ENCODE measurements at regions of chr3 and their contacts with region 1.

Region 1: GRCh38 chr3:65425880-65426279 is 612.8 kb downstream of the MAGI1 start:
- DNase-seq: no peak
- H3K4me3 ChIP-seq: no peak overlapping the region
- H3K27me3 ChIP-seq: no peaks in the 10 kb centered on the region
- CTCF ChIP-seq: peak; percentile 50

Region 2: DNA sequence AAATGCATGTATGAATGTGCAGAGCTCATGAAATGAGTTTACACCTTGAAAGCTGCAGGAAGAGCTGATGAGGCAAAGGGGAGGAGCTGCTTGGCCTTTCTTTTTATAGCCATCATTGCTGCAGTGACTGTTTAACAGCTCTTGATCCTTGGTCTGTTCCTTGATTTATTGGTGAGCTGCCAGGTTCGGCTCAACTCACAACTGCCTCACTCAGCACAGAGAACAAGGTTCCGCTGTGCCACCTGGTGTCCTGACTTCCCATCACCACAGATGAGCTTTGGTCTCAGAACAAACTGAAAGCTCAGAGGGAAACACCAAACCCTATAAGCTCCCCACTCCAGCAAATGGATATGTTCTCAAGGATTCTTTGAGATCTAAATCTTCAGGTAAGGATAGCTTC is 13.3 kb before region 1 on chr3:
- CTCF ChIA-PET with region 1: interaction called, 11 read pairs
- POLR2A ChIA-PET with region 1: no interaction called
- DNase-seq: no peak
- H3K4me3 ChIP-seq: no peak overlapping the region
- H3K27me3 ChIP-seq: no peaks in the 10 kb centered on the region
- CTCF ChIP-seq: no peak

Region 3: DNA sequence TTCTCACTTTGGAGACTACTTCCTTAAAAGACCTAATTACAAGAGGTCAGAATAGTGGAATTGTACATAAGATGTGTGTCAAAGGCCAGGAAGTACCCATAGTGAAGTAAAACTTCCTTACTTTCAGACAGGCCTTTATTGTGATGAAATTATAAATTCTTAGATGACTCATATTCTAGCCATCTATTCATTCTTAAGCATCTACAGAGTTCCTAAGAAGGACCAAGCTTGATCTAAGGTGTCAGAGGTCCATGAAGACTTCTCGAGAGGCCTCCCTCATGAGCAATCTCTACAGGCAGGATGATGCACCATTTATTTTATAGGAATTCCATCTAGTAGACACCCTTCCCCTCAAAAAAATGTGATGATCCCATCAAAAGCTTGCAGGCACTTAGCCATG is 119.5 kb after region 1 on chr3:
- CTCF ChIA-PET with region 1: no interaction called
- POLR2A ChIA-PET with region 1: no interaction called
- DNase-seq: no peak
- H3K4me3 ChIP-seq: no peak overlapping the region
- H3K27me3 ChIP-seq: no peaks in the 10 kb centered on the region
- CTCF ChIP-seq: no peak